ENCODE measurements at regions of chr4 and their contacts with region 1.

Region 1: GRCh38 chr4:157591245-157591644 is 370.7 kb downstream of the GRIA2 start:
- DNase-seq: no peak
- ATAC-seq: no peak
- H3K4me3 ChIP-seq: no peak overlapping the region
- H3K27ac ChIP-seq: no peak overlapping the region
- H3K4me1 ChIP-seq: no peaks in the 10 kb centered on the region
- H3K27me3 ChIP-seq: no peaks in the 10 kb centered on the region
- CTCF ChIP-seq: no peak
- POLR2A ChIP-seq: no peak

Region 2: GRCh38 chr4:157363360-157363759 is 227.9 kb before region 1 on chr4:
- intact Hi-C with region 1: no loop called
- DNase-seq: no peak
- ATAC-seq: no peak
- H3K4me3 ChIP-seq: no peak overlapping the region
- H3K27ac ChIP-seq: no peak overlapping the region
- H3K4me1 ChIP-seq: no peaks in the 10 kb centered on the region
- H3K27me3 ChIP-seq: no peaks in the 10 kb centered on the region
- CTCF ChIP-seq: no peak
- POLR2A ChIP-seq: no peak

Region 3: DNA sequence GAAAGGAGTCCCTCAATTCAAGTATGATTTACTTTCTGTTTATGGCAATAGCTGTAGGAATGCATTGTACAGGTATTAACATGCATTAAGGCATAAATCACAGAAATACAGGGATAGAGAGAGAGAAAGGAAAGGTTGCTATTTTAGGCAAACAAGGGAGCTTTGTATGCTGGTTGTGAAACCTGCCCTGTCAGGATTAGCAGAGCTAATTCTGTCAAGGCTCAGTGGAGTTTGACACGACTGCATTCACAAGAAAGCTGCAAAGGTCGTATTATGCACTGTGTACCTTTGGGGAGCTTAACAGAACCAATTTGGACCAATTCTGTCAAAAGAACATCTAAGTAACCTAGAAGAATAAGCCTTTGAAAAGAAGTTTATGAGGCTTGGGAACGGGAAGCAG is 131.5 kb before region 1 on chr4:
- intact Hi-C with region 1: loop called in 1 of 10 experiments (anchors 5 kb)
- DNase-seq: no peak
- ATAC-seq: no peak
- H3K4me3 ChIP-seq: no peak overlapping the region
- H3K27ac ChIP-seq: no peak overlapping the region
- H3K4me1 ChIP-seq: no peaks in the 10 kb centered on the region
- H3K27me3 ChIP-seq: no peaks in the 10 kb centered on the region
- CTCF ChIP-seq: no peak
- POLR2A ChIP-seq: no peak